PC-3 (cell line): ENCODE measurements at regions of chr9 and their contacts with region 1.

Region 1: DNA sequence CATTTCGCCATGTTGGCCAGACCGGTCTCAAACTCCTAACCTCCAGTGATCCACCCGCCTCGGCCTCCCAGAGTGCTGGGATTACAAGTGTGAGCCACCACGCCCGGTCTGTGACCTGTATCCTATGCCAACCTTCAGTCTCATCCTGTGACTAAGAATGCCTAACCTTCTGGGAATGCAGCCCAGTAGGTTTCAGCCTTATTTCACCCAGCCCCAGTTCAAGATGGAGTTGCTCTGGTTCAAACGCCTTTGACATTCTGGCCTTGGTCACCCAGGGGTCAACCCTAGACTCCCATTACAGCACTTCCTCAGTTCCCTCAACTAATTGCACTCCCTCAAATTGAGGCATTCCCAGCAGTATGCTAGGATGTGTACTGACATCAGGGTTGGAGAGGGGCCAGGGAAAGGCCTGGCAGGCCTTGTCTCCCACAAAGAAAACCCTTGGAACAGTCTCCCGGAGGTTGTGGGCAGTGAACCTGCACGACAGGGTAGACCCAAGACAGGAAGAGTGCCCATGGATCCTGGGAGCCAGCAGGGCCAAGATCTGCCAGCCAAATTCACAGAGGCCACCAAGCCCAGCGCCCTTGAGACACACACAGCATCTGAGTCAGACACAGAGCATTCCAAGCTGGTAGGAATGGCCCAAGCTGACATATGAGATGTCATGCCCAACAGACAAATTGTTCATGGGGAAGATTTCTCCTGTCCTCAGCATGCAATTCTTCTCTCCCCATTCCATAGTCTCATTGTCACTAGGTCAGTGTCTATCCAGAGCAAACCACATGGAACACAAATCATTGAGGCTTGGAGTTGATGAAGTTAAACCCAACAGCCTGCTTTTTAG is 24.9 kb upstream of the SMU1 start:
- DNase-seq: peak; percentile 78
- ATAC-seq: peak; percentile 84
- H3K4me3 ChIP-seq: no peak overlapping the region
- H3K27ac ChIP-seq: peak overlapping the region; percentile 88
- H3K4me1 ChIP-seq: peaks cover 28% of the 10 kb centered on the region
- H3K27me3 ChIP-seq: no peaks in the 10 kb centered on the region
- CTCF ChIP-seq: no peak

Region 2: GRCh38 chr9:33187519-33188218 is 86.3 kb after region 1 on chr9:
- CTCF ChIA-PET with region 1: no interaction called
- POLR2A ChIA-PET with region 1: no interaction called
- intact Hi-C with region 1: no loop called
- DNase-seq: no peak
- ATAC-seq: peak; percentile 40
- H3K4me3 ChIP-seq: no peak overlapping the region
- H3K27ac ChIP-seq: no peak overlapping the region
- H3K4me1 ChIP-seq: no peaks in the 10 kb centered on the region
- H3K27me3 ChIP-seq: no peaks in the 10 kb centered on the region
- CTCF ChIP-seq: no peak

Region 3: GRCh38 chr9:33393581-33393980 is 292.3 kb after region 1 on chr9:
- CTCF ChIA-PET with region 1: no interaction called
- POLR2A ChIA-PET with region 1: interaction called, 14 read pairs
- intact Hi-C with region 1: no loop called
- DNase-seq: no peak
- ATAC-seq: no peak
- H3K4me3 ChIP-seq: no peak overlapping the region
- H3K27ac ChIP-seq: no peak overlapping the region
- H3K4me1 ChIP-seq: peaks cover 6% of the 10 kb centered on the region; the same call in 1 of the 2 replicates
- H3K27me3 ChIP-seq: no peaks in the 10 kb centered on the region
- CTCF ChIP-seq: no peak